ENCODE measurements at regions of chr6 and their contacts with region 1.

Region 1: DNA sequence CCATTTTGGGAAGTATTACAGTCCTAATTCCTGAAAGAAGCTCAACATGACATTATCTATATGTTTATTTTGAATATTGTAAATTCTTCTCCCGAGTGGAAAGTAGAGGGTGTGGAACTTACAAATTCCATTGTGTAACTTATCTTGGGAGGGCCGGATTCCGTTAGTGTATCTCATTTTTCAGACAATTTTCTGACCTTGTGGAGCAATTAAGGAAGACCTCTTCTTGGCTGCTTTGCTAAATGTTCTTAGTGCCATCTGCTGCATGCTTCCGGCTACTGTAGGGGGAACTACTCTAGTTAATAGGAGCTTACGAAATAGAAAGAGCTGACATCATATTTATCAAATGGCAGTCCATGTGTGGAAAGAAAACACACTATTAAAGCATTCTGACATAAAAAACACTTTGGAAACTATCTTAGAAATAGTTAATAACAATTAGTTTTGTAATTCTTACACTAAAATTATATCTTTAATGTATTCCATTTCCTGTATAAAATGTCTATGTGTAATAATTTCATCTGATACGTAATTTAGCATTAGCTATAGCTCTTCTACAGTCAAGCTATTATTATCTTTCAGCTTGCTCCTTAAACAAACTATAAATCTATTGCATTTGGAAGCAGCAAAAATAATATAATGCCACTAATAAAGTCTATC is 41.5 kb upstream of the KCNQ5 start:
- DNase-seq: peak; percentile 75
- H3K27ac ChIP-seq: no peak overlapping the region
- CTCF ChIP-seq: peak; percentile 81

Region 2: DNA sequence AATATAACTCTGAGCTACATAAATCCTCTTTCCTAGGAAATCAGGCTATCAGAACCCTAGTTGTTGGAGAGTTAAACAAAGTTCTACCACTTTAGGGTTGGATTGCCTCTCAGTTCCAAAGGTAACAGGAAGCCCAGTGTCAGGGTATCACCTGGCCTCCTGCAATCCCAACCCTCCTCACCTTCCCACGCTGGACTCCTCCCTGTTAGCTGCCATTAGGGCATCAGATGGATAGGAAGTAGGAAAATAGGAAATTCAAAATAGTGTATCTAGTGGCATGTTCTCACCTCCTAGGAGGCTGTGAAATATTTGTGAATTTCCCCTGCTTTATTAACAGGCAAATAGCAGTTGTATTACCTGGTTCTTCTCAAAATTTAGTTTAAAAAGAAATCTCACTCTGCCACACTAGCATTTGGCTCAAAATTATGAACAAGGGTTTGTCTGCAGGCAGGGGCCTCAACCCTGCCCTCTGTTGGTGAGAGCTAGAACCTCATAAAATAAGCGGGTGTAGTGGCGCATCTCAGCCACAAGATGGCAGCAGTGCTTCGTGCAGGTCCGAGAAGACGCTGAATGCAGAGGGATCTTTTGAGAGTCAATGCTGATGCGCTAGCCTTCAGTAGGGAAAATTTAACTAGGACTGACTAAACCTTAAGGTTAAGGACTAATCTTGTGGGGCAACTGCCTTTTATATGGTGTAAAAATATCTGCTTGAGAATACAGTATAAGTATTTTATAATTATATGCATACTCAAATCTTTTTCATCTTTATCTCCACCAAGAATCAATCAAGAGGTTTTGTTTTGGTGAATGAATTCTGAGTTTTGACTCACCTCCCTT is 168.3 kb before region 1 on chr6:
- CTCF ChIA-PET with region 1: interaction called, 19 read pairs
- POLR2A ChIA-PET with region 1: no interaction called
- DNase-seq: peak; percentile 81
- H3K27ac ChIP-seq: no peak overlapping the region
- CTCF ChIP-seq: peak; percentile 100